ENCODE measurements at regions of chr3 and their contacts with region 1.

Region 1: DNA sequence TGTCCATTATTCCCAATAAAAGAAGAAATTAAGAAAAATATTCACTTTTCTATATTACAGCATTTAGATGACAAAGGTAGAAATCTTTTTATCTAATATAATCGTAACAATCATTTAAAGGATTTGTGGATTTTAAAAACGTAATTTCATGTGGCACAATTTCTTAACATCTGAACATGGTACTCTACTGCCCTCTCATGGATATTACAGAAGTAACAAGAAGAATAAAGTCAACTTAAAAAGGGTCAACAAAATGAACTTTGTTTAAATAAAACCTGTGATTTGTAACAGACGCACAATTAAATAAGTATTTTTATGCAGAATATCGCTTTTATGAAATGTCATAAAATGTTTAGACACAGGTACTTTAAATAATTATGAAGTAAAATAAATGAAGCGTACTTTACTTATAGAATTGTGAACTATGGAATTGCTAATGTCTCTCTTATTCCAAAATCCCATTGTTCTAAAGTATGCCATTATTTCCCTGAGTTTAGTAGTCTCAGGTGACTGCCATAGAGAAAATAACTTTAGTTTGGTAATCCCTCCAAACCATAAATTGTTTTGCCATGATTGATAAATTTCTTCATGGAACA is 366.8 kb upstream of the ZNF385D start:
- DNase-seq: no peak
- ATAC-seq: no peak
- H3K4me3 ChIP-seq: no peak overlapping the region
- H3K27ac ChIP-seq: no peak overlapping the region
- H3K4me1 ChIP-seq: peaks cover 0 to 4% of the 10 kb centered on the region in 2 donors
- H3K27me3 ChIP-seq: no peaks in the 10 kb centered on the region
- CTCF ChIP-seq: peak; percentile 27 to 66 (median 53)
- POLR2A ChIP-seq: no peak

Region 2: GRCh38 chr3:20340324-20340928 is 1777.4 kb before region 1 on chr3:
- in situ Hi-C with region 1: loop called in 2 of 4 experiments (anchors 10 to 25 kb)
- intact Hi-C with region 1: loop called (anchors 10 kb)
- DNase-seq: peak; percentile 15 to 44
- ATAC-seq: peak; percentile 47 to 51
- H3K4me3 ChIP-seq: peak overlapping the region in 1 of 4 donors; percentile 36
- H3K27ac ChIP-seq: no peak overlapping the region
- H3K4me1 ChIP-seq: no peaks in the 10 kb centered on the region
- H3K27me3 ChIP-seq: no peaks in the 10 kb centered on the region
- CTCF ChIP-seq: peak; percentile 61 to 85 (median 76)
- POLR2A ChIP-seq: no peak

Region 3: GRCh38 chr3:20503394-20504082 is 1614.3 kb before region 1 on chr3:
- in situ Hi-C with region 1: loop called in 2 of 4 experiments (anchors 10 to 25 kb)
- intact Hi-C with region 1: no loop called
- DNase-seq: no peak
- ATAC-seq: no peak
- H3K4me3 ChIP-seq: no peak overlapping the region
- H3K27ac ChIP-seq: no peak overlapping the region
- H3K4me1 ChIP-seq: no peaks in the 10 kb centered on the region
- H3K27me3 ChIP-seq: no peaks in the 10 kb centered on the region
- CTCF ChIP-seq: no peak
- POLR2A ChIP-seq: no peak

Region 4: DNA sequence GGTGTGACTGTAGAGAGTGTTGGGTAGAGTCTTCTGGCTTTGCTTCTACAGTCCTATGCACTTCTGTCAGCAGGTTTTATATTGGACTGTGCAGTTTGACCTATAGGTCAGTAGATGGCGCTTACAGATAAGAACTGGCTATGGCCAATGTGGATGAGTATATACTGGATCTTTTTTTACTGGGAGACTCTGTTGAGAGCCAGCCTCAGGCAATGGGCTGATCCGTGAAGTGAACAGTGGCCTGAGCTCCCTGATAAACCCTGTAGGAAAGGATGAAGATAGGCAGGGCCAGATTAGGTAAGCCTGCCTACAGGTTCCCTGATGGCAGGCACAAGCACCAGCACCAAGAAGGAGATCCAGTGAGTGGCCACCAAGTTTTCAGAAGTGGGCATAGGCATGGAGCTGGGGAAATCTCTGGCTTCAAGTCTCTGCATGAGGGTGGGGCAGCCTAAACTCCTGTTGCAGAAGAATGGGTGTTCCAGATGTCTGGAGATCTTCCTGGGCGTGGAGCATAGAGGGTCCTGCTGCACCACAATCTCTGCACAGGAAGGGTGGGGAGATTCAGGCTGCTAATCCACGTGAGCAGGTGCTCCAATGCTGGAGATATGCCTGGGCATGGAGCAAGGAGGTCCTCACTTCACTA is 1605.9 kb before region 1 on chr3:
- in situ Hi-C with region 1: loop called in 2 of 4 experiments (anchors 10 to 25 kb)
- intact Hi-C with region 1: no loop called
- DNase-seq: no peak
- ATAC-seq: peak; percentile 75 to 81
- H3K4me3 ChIP-seq: no peak overlapping the region
- H3K27ac ChIP-seq: no peak overlapping the region
- H3K4me1 ChIP-seq: no peaks in the 10 kb centered on the region
- H3K27me3 ChIP-seq: no peaks in the 10 kb centered on the region
- CTCF ChIP-seq: peak; percentile 48 to 70 (median 52)
- POLR2A ChIP-seq: no peak

Region 5: DNA sequence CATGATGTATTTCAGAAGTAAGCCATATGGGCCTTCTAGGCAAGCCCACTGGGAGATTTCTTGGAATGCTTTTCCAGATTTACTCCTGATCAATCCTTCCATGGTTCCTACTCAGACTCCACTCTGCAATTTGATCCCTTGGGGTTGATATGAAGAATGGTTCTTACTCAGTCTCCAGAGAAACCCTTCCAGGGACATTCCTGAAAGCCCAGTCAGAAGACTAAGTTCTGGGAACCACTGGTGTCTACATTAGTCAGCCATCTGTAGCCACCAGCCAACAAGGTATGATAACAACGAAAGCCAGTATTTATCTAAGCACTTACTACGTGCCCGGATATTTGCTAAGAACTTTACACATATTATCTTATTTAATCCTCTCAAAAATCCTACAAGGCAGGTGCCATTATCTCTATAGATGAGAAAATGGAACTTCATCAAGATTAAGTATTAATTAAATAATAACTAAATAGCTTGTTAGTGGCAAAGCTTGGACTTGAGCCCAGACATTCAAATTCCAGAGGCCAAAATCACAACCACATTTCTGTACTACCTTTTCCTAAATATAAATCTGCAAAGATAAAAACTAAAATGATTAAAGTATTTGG is 399.6 kb before region 1 on chr3:
- in situ Hi-C with region 1: no loop called
- intact Hi-C with region 1: no loop called
- DNase-seq: no peak
- ATAC-seq: peak in 1 of 2 donors; percentile 42
- H3K4me3 ChIP-seq: no peak overlapping the region
- H3K27ac ChIP-seq: peak overlapping the region in 1 of 4 donors; percentile 14
- H3K4me1 ChIP-seq: no peaks in the 10 kb centered on the region
- H3K27me3 ChIP-seq: no peaks in the 10 kb centered on the region
- CTCF ChIP-seq: no peak
- POLR2A ChIP-seq: no peak